Sigmoid colon (tissue), 7 donors: ENCODE measurements at regions of chr9 and their contacts with region 1.

Region 1: DNA sequence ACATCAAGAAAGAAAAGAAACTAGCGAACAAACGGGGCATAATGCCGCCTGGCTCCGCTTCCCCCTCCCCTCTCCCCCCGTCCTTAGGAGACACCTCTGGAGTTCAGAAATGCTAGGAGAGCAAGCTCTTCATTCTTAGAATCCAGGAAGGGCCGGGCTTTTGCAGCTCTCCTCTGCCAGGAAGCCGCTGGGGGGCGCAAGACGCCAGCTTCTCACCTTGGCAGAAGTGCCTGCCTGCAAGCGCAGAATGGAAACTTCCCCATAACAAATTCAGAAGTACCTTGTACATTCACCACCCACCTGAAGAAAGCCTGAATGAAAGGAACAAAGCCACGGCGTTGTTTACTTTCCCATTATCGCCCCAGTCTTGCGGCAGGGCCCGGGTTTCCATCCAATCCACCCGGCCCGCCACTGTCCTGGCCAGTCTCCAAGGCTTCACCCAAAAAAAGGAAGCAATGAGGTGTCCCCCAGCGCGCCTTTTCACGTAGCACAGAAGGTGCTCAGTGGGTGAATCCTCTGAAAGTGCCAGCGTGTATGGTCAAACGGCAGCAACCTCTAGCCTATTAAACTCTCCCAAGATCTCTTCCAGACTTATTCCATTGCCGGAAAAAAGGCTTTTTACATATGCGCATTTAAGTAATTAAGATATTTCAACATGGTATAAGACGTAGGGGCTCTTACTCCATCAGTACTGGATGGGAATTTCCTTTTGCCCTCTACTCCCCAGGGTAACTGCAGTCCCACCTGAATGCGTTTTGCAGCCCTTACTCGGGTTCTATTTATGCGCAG is 1.6 kb upstream of the GADD45G start:
- DNase-seq: peak; percentile 94
- H3K4me3 ChIP-seq: peak overlapping the region; percentile 60 to 94 (median 82)
- H3K27ac ChIP-seq: peak overlapping the region; percentile 89 to 98 (median 95)
- H3K4me1 ChIP-seq: peaks cover 0 to 43% (median 35%) of the 10 kb centered on the region in 4 donors
- H3K27me3 ChIP-seq: no peaks in the 10 kb centered on the region
- CTCF ChIP-seq: peak; percentile 54 to 86 (median 80)
- EP300 ChIP-seq: no peak
- POLR2A ChIP-seq: no peak

Region 2: DNA sequence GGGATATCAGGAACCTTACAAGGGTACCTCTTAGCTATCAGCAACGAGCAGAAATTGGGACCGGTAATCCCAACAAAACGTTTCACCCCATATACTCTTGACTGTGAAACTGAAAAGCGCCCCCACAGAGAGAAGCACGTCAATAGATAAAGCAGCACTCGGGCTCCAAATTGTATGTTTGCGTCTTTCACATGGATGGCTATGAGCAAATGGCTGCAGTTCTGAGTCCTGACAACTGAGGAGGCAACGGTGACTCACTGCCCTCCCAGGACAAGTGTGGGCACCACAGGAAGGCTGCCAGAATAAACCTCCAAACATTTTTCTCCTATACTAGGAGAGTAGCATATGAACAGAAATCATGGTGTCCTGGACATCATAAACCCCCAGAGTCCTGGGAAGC is 141.9 kb before region 1 on chr9:
- intact Hi-C with region 1: no loop called
- DNase-seq: no peak
- H3K4me3 ChIP-seq: no peak overlapping the region
- H3K27ac ChIP-seq: no peak overlapping the region
- H3K4me1 ChIP-seq: no peaks in the 10 kb centered on the region
- H3K27me3 ChIP-seq: no peaks in the 10 kb centered on the region
- CTCF ChIP-seq: no peak
- EP300 ChIP-seq: no peak
- POLR2A ChIP-seq: no peak

Region 3: DNA sequence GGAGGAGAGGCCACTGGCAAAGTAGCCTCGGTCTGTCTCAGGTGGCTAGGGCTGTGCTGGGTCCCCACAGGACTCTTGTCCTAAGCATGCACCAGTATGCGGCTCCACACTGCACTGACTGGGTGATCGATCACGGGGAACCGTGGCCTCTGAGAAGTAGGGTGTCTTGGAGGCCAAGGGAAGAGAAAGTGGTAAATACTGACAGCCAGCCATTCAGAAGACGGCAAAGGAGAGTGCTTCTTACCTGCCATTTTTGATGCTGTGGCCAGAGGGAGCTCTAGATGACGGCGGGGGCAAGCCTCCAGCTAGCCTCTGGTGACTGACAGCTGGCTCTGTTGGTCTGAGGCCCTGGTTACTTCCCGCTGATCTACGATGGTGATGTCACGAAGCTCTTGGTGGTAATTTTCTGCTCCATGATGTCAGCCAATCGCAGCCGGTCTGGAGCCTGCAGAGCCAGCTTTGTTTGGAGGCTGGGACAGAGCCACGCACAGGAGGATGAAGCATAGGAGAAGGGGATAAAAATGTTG is 38.8 kb before region 1 on chr9:
- intact Hi-C with region 1: no loop called
- DNase-seq: no peak
- H3K4me3 ChIP-seq: no peak overlapping the region
- H3K27ac ChIP-seq: no peak overlapping the region
- H3K4me1 ChIP-seq: no peaks in the 10 kb centered on the region
- H3K27me3 ChIP-seq: no peaks in the 10 kb centered on the region
- CTCF ChIP-seq: no peak
- EP300 ChIP-seq: no peak
- POLR2A ChIP-seq: no peak

Region 4: DNA sequence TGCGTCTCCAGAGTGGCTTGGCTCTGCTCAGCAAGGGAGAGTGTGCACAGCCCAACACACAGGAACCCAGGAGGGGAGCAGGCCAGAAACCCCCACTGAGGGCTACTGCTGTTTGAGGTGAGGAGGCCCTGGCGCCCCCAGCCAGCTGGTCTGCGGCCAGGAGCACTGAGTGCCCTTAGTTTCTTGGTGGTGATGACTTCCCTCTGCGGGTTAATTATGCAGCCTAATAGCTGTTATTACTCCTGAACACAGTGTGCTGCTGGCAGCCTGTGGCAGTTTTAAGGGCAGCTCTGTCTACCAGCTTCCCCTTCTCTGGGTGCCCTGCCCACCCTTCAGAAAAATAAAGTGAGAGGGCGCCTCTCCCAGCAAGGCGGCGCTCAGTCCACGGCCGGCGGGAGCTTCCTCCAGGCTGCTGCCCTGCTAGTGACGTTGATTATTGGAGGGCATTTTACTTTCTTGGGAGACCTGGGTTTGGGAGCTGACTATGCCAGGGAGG is 20.8 kb after region 1 on chr9:
- intact Hi-C with region 1: loop called (anchors 1 kb)
- DNase-seq: peak; percentile 88
- H3K4me3 ChIP-seq: no peak overlapping the region
- H3K27ac ChIP-seq: peak overlapping the region; percentile 82 to 88 (median 85)
- H3K4me1 ChIP-seq: peaks cover 0 to 72% (median 48%) of the 10 kb centered on the region in 4 donors
- H3K27me3 ChIP-seq: no peaks in the 10 kb centered on the region
- CTCF ChIP-seq: peak in 1 of 4 experiments; percentile 20
- EP300 ChIP-seq: no peak
- POLR2A ChIP-seq: no peak

Region 5: GRCh38 chr9:89661956-89662717 is 59.0 kb after region 1 on chr9:
- intact Hi-C with region 1: loop called (anchors 2 kb)
- DNase-seq: peak; percentile 99
- H3K4me3 ChIP-seq: peak overlapping the region in 3 of 4 donors; percentile 28 to 44 (median 33)
- H3K27ac ChIP-seq: peak overlapping the region; percentile 71 to 84 (median 74)
- H3K4me1 ChIP-seq: peaks cover 0 to 30% (median 22%) of the 10 kb centered on the region in 4 donors
- H3K27me3 ChIP-seq: no peaks in the 10 kb centered on the region
- CTCF ChIP-seq: no peak
- EP300 ChIP-seq: no peak
- POLR2A ChIP-seq: no peak

Region 6: DNA sequence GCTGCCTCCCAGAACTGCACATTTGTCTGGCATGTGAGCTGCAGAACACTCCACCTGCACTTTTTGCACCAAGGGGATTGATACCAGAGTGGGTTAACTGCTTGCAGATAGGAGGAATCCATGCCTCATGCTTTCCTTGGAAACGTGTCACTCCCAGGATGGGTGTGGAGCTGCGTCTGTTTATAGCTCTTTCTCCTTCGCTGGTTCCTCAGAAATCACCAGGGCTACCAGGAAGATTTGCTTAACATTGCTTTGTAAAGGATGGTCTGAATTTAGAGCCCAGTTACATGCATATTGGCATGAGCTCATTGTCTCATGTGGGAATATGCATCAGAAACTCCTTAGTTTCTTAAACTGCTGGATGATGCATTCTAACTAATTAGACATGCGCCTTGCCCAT is 236.3 kb after region 1 on chr9:
- intact Hi-C with region 1: loop called (anchors 5 kb)
- DNase-seq: no peak
- H3K4me3 ChIP-seq: no peak overlapping the region
- H3K27ac ChIP-seq: no peak overlapping the region
- H3K4me1 ChIP-seq: peaks cover 0 to 33% (median 21%) of the 10 kb centered on the region in 4 donors
- H3K27me3 ChIP-seq: no peaks in the 10 kb centered on the region
- CTCF ChIP-seq: no peak
- EP300 ChIP-seq: no peak
- POLR2A ChIP-seq: no peak

Region 7: GRCh38 chr9:89891591-89892304 is 288.6 kb after region 1 on chr9:
- intact Hi-C with region 1: loop called (anchors 1 kb)
- DNase-seq: peak; percentile 95
- H3K4me3 ChIP-seq: no peak overlapping the region
- H3K27ac ChIP-seq: peak overlapping the region; percentile 81 to 86 (median 82)
- H3K4me1 ChIP-seq: peaks cover 0 to 35% (median 28%) of the 10 kb centered on the region in 4 donors
- H3K27me3 ChIP-seq: no peaks in the 10 kb centered on the region
- CTCF ChIP-seq: no peak
- EP300 ChIP-seq: peak in 3 of 4 donors; percentile 88 to 92 (median 90)
- POLR2A ChIP-seq: no peak

Region 8: GRCh38 chr9:89999534-90000370 is 396.6 kb after region 1 on chr9:
- intact Hi-C with region 1: loop called (anchors 5 kb)
- DNase-seq: peak; percentile 88
- H3K4me3 ChIP-seq: peak overlapping the region in 3 of 4 donors; percentile 15 to 36 (median 28)
- H3K27ac ChIP-seq: peak overlapping the region; percentile 78 to 87 (median 84)
- H3K4me1 ChIP-seq: peaks cover 0 to 70% (median 59%) of the 10 kb centered on the region in 4 donors
- H3K27me3 ChIP-seq: no peaks in the 10 kb centered on the region
- CTCF ChIP-seq: no peak
- EP300 ChIP-seq: peak in 1 of 4 donors; percentile 73
- POLR2A ChIP-seq: no peak

Region 9: GRCh38 chr9:90102292-90102901 is 499.2 kb after region 1 on chr9:
- intact Hi-C with region 1: loop called (anchors 1 kb)
- DNase-seq: peak; percentile 94
- H3K4me3 ChIP-seq: no peak overlapping the region
- H3K27ac ChIP-seq: no peak overlapping the region
- H3K4me1 ChIP-seq: peaks cover 0 to 22% (median 10%) of the 10 kb centered on the region in 4 donors
- H3K27me3 ChIP-seq: no peaks in the 10 kb centered on the region
- CTCF ChIP-seq: peak; percentile 72 to 93 (median 88)
- EP300 ChIP-seq: no peak
- POLR2A ChIP-seq: no peak